Right ventricle myocardium inferior (tissue), 1 donor: ENCODE measurements at regions of chr20 and their contacts with region 1.

Region 1: GRCh38 chr20:9407805-9408421 is 106.5 kb upstream of the LAMP5 start:
- DNase-seq: no peak
- ATAC-seq: no peak

Region 2: GRCh38 chr20:9488063-9488462 is 80.2 kb after region 1 on chr20:
- intact Hi-C with region 1: loop called (anchors 10 kb)
- DNase-seq: no peak
- ATAC-seq: no peak

Region 3: DNA sequence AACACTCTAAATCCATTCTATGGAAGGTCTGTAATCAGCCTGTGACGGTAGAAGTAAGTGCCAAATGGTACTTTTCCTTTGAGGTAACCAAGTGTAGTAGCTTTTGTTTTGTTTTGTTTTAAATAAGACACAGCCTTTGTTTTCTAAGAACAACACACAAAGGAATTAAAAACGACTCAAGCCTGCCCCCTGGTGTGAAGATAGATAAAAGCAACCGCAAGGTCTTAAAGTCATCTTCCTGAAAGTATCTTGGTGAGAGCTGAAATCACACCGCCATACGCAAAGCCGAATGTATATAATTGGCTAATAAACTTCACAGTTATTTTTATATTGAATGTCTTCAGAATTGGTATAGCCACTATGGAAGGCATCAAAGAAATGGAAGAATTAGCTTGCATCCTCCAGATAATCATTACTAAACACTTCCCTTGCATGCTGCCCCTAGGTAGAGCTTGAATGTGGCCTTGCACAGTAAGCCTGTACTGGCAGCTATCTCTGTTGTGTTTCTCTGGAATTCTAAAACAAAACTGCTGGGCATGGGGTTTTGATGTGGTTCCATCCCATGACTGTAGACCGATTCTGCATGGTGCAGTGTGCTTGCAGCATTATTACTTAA is 202.1 kb after region 1 on chr20:
- intact Hi-C with region 1: loop called (anchors 1 kb)
- DNase-seq: no peak
- ATAC-seq: no peak